ENCODE measurements at regions of chr1 and their contacts with region 1.

Region 1: GRCh38 chr1:40153073-40153770 is 8.0 kb upstream of the RLF start:
- DNase-seq: peak; percentile 21
- H3K4me3 Mint-ChIP-seq: no peak overlapping the region
- H3K27ac Mint-ChIP-seq: peak overlapping the region; percentile 21
- H3K4me1 Mint-ChIP-seq: peaks cover 13% of the 10 kb centered on the region
- H3K27me3 Mint-ChIP-seq: peaks cover 12% of the 10 kb centered on the region

Region 2: GRCh38 chr1:40241362-40241761 is 88.1 kb after region 1 on chr1:
- intact Hi-C with region 1: no loop called
- DNase-seq: no peak
- H3K4me3 Mint-ChIP-seq: peak overlapping the region; percentile 23
- H3K27ac Mint-ChIP-seq: peak overlapping the region; percentile 94
- H3K4me1 Mint-ChIP-seq: peaks cover 77% of the 10 kb centered on the region
- H3K27me3 Mint-ChIP-seq: no peaks in the 10 kb centered on the region

Region 3: GRCh38 chr1:40305457-40305856 is 152.2 kb after region 1 on chr1:
- intact Hi-C with region 1: loop called (anchors 1 kb)
- DNase-seq: no peak
- H3K4me3 Mint-ChIP-seq: no peak overlapping the region
- H3K27ac Mint-ChIP-seq: no peak overlapping the region
- H3K4me1 Mint-ChIP-seq: peaks cover 2% of the 10 kb centered on the region
- H3K27me3 Mint-ChIP-seq: no peaks in the 10 kb centered on the region

Region 4: GRCh38 chr1:40338745-40339424 is 185.7 kb after region 1 on chr1:
- intact Hi-C with region 1: loop called (anchors 1 kb)
- DNase-seq: peak; percentile 84
- H3K4me3 Mint-ChIP-seq: peak overlapping the region; percentile 38
- H3K27ac Mint-ChIP-seq: peak overlapping the region; percentile 75
- H3K4me1 Mint-ChIP-seq: peaks cover 53% of the 10 kb centered on the region
- H3K27me3 Mint-ChIP-seq: no peaks in the 10 kb centered on the region